ENCODE measurements at regions of chr15 and their contacts with region 1.

Region 1: GRCh38 chr15:29925227-29926082 is 103.2 kb upstream of the TJP1 start:
- DNase-seq: no peak
- H3K4me3 ChIP-seq: no peak overlapping the region
- CTCF ChIP-seq: peak; percentile 90

Region 2: DNA sequence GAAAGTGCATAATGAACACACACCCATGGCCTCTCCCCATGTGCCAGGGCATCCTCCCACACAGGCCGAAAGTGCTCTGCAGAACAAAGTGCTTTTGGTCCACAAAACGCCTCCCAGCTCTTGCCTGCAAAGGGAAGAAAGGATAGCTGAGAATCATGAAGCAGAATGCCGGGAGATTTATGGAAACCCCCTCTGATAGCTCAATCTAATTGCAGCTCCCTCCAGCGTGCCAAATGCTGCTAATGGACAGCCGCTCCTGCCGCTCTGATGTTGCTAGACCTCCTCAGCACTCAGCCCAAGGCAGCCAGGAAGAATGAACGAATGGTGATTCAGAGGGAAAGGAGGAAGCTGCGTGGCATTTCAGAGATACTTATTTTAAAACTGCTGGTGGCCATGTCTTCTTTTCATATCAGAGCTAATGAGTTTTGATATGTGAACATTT is 248.5 kb before region 1 on chr15:
- CTCF ChIA-PET with region 1: interaction called, 10 read pairs
- POLR2A ChIA-PET with region 1: no interaction called
- DNase-seq: no peak
- H3K4me3 ChIP-seq: peak overlapping the region; percentile 6
- CTCF ChIP-seq: no peak

Region 3: GRCh38 chr15:29747837-29748417 is 177.5 kb before region 1 on chr15:
- CTCF ChIA-PET with region 1: interaction called, 133 read pairs
- POLR2A ChIA-PET with region 1: interaction called, 6 read pairs
- DNase-seq: no peak
- H3K4me3 ChIP-seq: no peak overlapping the region
- CTCF ChIP-seq: peak; percentile 4

Region 4: GRCh38 chr15:29788433-29789034 is 136.9 kb before region 1 on chr15:
- CTCF ChIA-PET with region 1: interaction called, 13 read pairs
- POLR2A ChIA-PET with region 1: no interaction called
- DNase-seq: no peak
- H3K4me3 ChIP-seq: no peak overlapping the region
- CTCF ChIP-seq: no peak

Region 5: DNA sequence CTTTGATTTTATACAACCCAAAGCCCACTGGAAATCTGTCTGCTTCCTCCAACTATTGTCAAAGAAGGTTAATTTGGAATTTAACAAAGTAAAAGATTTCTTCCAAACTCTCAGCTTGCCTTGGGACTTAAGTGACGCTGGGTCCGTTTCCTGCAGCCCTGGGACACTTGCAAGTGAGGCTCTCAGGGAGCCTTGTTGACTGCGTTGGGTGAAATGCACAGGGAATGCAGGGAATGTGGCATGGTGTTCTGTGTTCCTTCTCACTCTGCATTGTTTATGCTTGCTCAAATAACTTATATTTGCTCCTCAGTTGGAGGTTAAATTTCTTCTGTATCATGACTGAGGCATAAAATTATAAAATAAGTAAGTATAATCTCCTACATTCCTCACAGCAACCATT is 42.3 kb before region 1 on chr15:
- CTCF ChIA-PET with region 1: no interaction called
- POLR2A ChIA-PET with region 1: no interaction called
- DNase-seq: no peak
- H3K4me3 ChIP-seq: no peak overlapping the region
- CTCF ChIP-seq: no peak

Region 6: GRCh38 chr15:29942143-29942542 is 16.7 kb after region 1 on chr15:
- CTCF ChIA-PET with region 1: interaction called, 48 read pairs
- POLR2A ChIA-PET with region 1: no interaction called
- DNase-seq: no peak
- H3K4me3 ChIP-seq: no peak overlapping the region
- CTCF ChIP-seq: peak; percentile 21

Measured in AG04449 (cell line).